CD8-positive, alpha-beta T cell (primary cell): ENCODE measurements at regions of chr3 and their contacts with region 1.

Region 1: DNA sequence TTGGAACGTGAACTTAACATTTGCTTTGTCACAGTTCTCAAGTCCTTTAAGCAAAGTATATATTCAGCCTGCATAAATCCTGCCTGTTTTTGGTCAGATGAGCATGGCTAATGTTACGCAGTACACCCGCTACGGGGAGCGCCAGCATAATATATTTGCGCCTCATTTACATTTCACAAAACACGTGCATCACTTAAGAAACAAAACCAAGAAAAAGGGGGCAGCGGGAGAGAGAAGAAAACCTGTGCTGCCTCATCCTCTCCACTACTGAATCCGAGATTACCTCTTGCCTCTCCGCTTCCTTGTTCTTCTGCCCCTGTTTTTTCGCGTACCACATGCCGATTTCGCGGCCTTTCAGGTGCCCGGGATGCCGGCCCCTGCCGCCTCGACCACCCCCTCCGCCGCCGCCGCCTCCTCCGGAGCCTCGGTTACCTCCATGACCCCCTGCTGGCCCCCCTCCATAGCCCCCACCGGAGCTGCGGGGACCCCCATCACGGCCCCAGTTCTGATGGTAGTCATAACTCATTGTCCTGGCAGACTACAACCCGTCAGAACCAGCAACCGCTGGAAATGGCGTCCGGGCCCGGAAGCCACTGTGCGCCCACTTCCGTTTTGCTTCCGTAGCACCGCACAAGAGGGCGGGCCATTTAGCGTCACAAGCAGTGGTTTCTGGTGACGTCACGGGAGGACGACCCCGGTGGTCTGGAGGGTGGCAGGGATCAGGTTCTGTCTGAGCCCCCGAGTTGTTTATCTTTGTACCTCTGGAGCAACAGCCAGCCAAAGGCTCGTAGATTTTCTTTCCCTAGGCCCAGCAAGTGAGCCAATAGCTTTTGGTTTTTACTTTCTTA is at the start of gene DHX36:
- DNase-seq: peak; percentile 85 to 97 (median 92)
- ATAC-seq: peak; percentile 81
- H3K4me3 ChIP-seq: peak within 1 kb of the TSS; percentile 64 to 76
- H3K4me3 Mint-ChIP-seq: peak within 1 kb of the TSS; percentile 96
- H3K27ac ChIP-seq: peak within 1 kb of the TSS; percentile 97
- H3K27ac Mint-ChIP-seq: peak within 1 kb of the TSS; percentile 99
- H3K4me1 ChIP-seq: peaks cover 45% of the 10 kb centered on the region
- H3K4me1 Mint-ChIP-seq: peaks cover 33% of the 10 kb centered on the region
- H3K27me3 ChIP-seq: no peaks in the 10 kb centered on the region
- H3K27me3 Mint-ChIP-seq: no peaks in the 10 kb centered on the region
- CTCF ChIP-seq: no peak
- total RNA-seq, gene DHX36: 149 to 152 TPM

Region 2: GRCh38 chr3:154285221-154285620 is 38.9 kb before region 1 on chr3:
- CTCF ChIA-PET with region 1: no interaction called
- POLR2A ChIA-PET with region 1: no interaction called
- intact Hi-C with region 1: loop called in 1 of 2 experiments (anchors 5 kb)
- DNase-seq: no peak
- ATAC-seq: no peak
- H3K4me3 ChIP-seq: no peak overlapping the region
- H3K4me3 Mint-ChIP-seq: no peak overlapping the region
- H3K27ac ChIP-seq: no peak overlapping the region
- H3K27ac Mint-ChIP-seq: no peak overlapping the region
- H3K4me1 ChIP-seq: no peaks in the 10 kb centered on the region
- H3K4me1 Mint-ChIP-seq: peaks cover 7% of the 10 kb centered on the region
- H3K27me3 ChIP-seq: no peaks in the 10 kb centered on the region
- H3K27me3 Mint-ChIP-seq: no peaks in the 10 kb centered on the region
- CTCF ChIP-seq: no peak

Region 3: GRCh38 chr3:155854141-155854940 is 1530.2 kb after region 1 on chr3 and contains the start of gene SLC33A1:
- CTCF ChIA-PET with region 1: no interaction called
- POLR2A ChIA-PET with region 1: no interaction called
- intact Hi-C with region 1: loop called (anchors 1 to 5 kb)
- DNase-seq: peak; percentile 96 to 100 (median 99)
- ATAC-seq: peak; percentile 89
- H3K4me3 ChIP-seq: peak within 1 kb of the TSS; percentile 85 to 92
- H3K4me3 Mint-ChIP-seq: peak within 1 kb of the TSS; percentile 98
- H3K27ac ChIP-seq: peak within 1 kb of the TSS; percentile 90 to 95
- H3K27ac Mint-ChIP-seq: peak within 1 kb of the TSS; percentile 99
- H3K4me1 ChIP-seq: peaks cover 33% of the 10 kb centered on the region
- H3K4me1 Mint-ChIP-seq: peaks cover 39% of the 10 kb centered on the region
- H3K27me3 ChIP-seq: no peaks in the 10 kb centered on the region
- H3K27me3 Mint-ChIP-seq: no peaks in the 10 kb centered on the region
- CTCF ChIP-seq: no peak
- total RNA-seq, gene SLC33A1: 12.6 to 12.9 TPM